CD4-positive, alpha-beta T cell (primary cell): ENCODE measurements at regions of chr7 and their contacts with region 1.

Region 1: DNA sequence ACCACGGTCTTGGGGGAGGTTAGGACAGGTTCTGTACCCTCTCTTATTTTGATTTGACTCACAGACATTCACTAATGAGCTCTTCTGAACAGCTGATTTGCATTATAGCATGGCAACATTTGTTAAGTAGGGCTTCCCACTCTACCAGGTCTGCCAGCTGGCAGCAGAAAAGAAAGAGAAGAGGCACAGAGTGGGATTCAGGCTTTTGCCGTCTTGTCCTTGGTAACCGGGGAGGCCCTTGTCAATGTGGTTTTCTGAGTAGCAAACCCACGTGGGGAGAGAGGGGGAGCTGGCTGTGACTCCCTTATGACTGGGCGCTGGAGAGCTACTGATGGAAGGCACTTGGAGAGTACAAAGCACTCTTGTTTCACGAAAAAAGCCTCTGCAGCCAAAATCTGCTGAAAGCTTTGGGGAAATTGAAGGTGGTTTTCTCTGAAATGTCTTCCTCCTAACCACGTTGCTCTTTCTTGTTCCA is 355.3 kb upstream of the GALNT17 start:
- DNase-seq: peak in 6 of 14 experiments; percentile 15 to 63 (median 41)
- ATAC-seq: peak; percentile 44
- H3K4me3 ChIP-seq: no peak overlapping the region
- H3K4me3 Mint-ChIP-seq: peak overlapping the region; percentile 51
- H3K27ac ChIP-seq: peak overlapping the region in 1 of 2 donors; percentile 41
- H3K27ac Mint-ChIP-seq: peak overlapping the region; percentile 71
- H3K4me1 ChIP-seq: peaks cover 44% of the 10 kb centered on the region
- H3K4me1 Mint-ChIP-seq: peaks cover 48% of the 10 kb centered on the region
- H3K27me3 ChIP-seq: no peaks in the 10 kb centered on the region
- H3K27me3 Mint-ChIP-seq: no peaks in the 10 kb centered on the region
- CTCF ChIP-seq: no peak

Region 2: DNA sequence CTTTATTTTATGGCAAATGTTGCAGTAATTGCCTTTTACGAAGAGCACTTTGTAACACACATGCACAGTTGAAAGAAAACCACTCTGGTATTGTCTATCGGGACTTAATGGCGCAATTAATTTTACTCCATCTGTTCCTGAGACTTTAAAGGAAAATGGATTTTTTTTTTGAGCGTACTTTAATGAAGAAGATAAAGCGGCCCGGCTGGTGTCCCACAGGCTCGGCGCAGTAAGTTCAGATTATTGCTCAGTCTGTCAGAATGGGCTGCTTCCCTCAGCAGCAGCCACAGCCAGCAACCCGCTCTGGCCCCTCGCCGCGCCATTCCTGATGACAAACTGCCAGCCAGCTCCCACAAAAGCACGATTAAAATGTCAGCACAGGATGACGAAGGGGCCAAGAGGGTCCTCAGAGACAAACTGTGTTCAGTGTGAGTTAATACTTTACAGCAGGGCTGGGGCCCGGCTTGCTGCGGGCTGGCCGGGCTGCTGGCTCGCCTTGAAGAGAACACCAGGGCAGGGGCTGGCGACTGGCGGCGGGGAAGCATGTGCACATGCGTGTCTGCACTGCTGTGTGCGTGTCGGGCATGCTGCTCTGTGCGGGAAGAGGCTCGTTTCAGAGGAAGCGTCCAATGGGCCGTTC is 145.7 kb before region 1 on chr7:
- CTCF ChIA-PET with region 1: no interaction called
- POLR2A ChIA-PET with region 1: no interaction called
- intact Hi-C with region 1: no loop called
- DNase-seq: no peak
- ATAC-seq: no peak
- H3K4me3 ChIP-seq: no peak overlapping the region
- H3K4me3 Mint-ChIP-seq: no peak overlapping the region
- H3K27ac ChIP-seq: no peak overlapping the region
- H3K27ac Mint-ChIP-seq: no peak overlapping the region
- H3K4me1 ChIP-seq: no peaks in the 10 kb centered on the region
- H3K4me1 Mint-ChIP-seq: no peaks in the 10 kb centered on the region
- H3K27me3 ChIP-seq: no peaks in the 10 kb centered on the region
- H3K27me3 Mint-ChIP-seq: no peaks in the 10 kb centered on the region
- CTCF ChIP-seq: no peak

Region 3: GRCh38 chr7:70700941-70701425 is 75.7 kb before region 1 on chr7:
- CTCF ChIA-PET with region 1: no interaction called
- POLR2A ChIA-PET with region 1: no interaction called
- intact Hi-C with region 1: no loop called
- DNase-seq: no peak
- ATAC-seq: no peak
- H3K4me3 ChIP-seq: no peak overlapping the region
- H3K4me3 Mint-ChIP-seq: no peak overlapping the region
- H3K27ac ChIP-seq: no peak overlapping the region
- H3K27ac Mint-ChIP-seq: no peak overlapping the region
- H3K4me1 ChIP-seq: peaks cover 8% of the 10 kb centered on the region
- H3K4me1 Mint-ChIP-seq: peaks cover 27% of the 10 kb centered on the region
- H3K27me3 ChIP-seq: peaks cover 0 to 14% of the 10 kb centered on the region in 2 experiments
- H3K27me3 Mint-ChIP-seq: peaks cover 27% of the 10 kb centered on the region
- CTCF ChIP-seq: no peak

Region 4: GRCh38 chr7:70788276-70788675 is 11.6 kb after region 1 on chr7:
- CTCF ChIA-PET with region 1: no interaction called
- POLR2A ChIA-PET with region 1: interaction called, 26 read pairs
- intact Hi-C with region 1: no loop called
- DNase-seq: peak in 13 of 14 experiments; percentile 11 to 85 (median 23)
- ATAC-seq: peak; percentile 86
- H3K4me3 ChIP-seq: peak overlapping the region; percentile 21
- H3K4me3 Mint-ChIP-seq: peak overlapping the region; percentile 28
- H3K27ac ChIP-seq: peak overlapping the region in 1 of 2 donors; percentile 72
- H3K27ac Mint-ChIP-seq: peak overlapping the region; percentile 87
- H3K4me1 ChIP-seq: peaks cover 46% of the 10 kb centered on the region
- H3K4me1 Mint-ChIP-seq: peaks cover 37% of the 10 kb centered on the region
- H3K27me3 ChIP-seq: no peaks in the 10 kb centered on the region
- H3K27me3 Mint-ChIP-seq: no peaks in the 10 kb centered on the region
- CTCF ChIP-seq: no peak